Activated B cell treated with CpG ODN at 0.5 μM for 24 hours (primary cell): ENCODE measurements at regions of chr11 and their contacts with region 1.

Region 1: GRCh38 chr11:8732748-8733241 is 50.2 kb downstream of the RPL27A start:
- DNase-seq: no peak
- ATAC-seq: peak; percentile 18
- H3K4me3 Mint-ChIP-seq: peak overlapping the region; percentile 69
- H3K27ac Mint-ChIP-seq: peak overlapping the region; percentile 90
- H3K4me1 Mint-ChIP-seq: peaks cover 34% of the 10 kb centered on the region
- H3K27me3 Mint-ChIP-seq: no peaks in the 10 kb centered on the region
- CTCF ChIP-seq: no peak

Region 2: DNA sequence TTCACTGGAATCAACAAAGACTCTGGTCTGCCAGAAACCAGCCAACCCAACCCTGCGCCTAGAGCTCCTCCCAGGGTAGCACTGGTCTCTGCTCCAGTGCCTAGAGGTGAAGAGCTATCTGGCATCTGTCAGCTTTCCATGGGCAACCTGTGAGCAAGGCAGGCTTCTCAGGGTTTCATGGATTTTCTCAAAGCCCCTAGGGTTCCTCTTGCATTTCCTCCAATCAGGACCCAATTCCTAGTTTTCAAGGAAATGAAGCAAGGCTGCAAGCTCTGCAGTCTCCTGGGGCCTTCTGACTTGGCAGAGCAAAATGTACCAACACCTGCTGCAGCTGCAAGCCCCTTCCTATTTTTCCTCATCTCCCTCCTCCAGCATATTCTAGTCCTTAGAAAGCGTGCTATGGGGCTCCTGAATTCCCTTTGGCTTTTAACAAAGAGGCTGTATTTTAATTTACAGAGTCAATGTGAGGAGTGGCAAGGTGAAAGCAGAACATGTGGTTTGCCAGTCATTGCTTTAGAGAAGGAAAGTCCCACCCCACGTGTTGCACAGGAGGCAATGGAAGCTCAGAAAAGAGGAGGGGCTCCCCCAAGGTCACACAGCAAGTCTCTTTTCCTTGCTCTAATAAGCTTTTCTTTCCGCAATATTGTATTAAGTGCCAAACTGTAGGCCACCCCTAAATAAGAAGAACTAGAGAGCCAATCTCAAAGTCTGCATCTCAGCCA is 531.0 kb before region 1 on chr11:
- CTCF ChIA-PET with region 1: no interaction called
- POLR2A ChIA-PET with region 1: no interaction called
- intact Hi-C with region 1: loop called (anchors 5 kb)
- DNase-seq: peak; percentile 36
- ATAC-seq: peak; percentile 85
- H3K4me3 Mint-ChIP-seq: peak overlapping the region; percentile 16
- H3K27ac Mint-ChIP-seq: peak overlapping the region; percentile 87
- H3K4me1 Mint-ChIP-seq: peaks cover 74% of the 10 kb centered on the region
- H3K27me3 Mint-ChIP-seq: no peaks in the 10 kb centered on the region
- CTCF ChIP-seq: no peak

Region 3: GRCh38 chr11:8832571-8833260 is 99.9 kb after region 1 on chr11:
- CTCF ChIA-PET with region 1: no interaction called
- POLR2A ChIA-PET with region 1: no interaction called
- intact Hi-C with region 1: loop called (anchors 5 kb)
- DNase-seq: peak; percentile 22
- ATAC-seq: peak; percentile 96
- H3K4me3 Mint-ChIP-seq: no peak overlapping the region
- H3K27ac Mint-ChIP-seq: peak overlapping the region; percentile 74
- H3K4me1 Mint-ChIP-seq: peaks cover 16% of the 10 kb centered on the region
- H3K27me3 Mint-ChIP-seq: no peaks in the 10 kb centered on the region
- CTCF ChIP-seq: no peak